HepG2 (cell line): ENCODE measurements at regions of chr6 and their contacts with region 1.

Region 1: DNA sequence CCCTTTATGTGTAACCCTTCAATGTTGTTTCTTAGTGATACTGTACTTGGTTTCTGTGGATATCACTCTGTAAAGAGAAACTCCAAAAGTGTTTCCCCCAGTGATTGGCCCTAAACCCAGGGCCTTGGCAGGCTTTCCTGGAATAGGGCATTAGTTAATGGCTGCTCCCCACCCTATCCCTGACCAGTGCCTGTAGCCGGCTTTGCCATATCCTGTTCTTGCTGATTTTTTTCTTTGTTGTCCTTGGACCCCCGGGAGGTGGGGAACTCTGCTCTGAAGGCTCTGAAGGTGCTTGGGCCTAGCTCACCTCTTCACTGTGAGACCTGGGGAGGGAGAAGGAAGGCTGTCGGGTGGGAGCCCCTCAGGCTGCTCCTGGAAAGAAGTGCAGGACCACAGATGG is 120.1 kb downstream of the TCP11 start:
- DNase-seq: no peak
- ATAC-seq: no peak
- H3K4me3 ChIP-seq: no peak overlapping the region
- H3K27ac ChIP-seq: no peak overlapping the region
- H3K4me1 ChIP-seq: no peaks in the 10 kb centered on the region
- H3K27me3 ChIP-seq: no peaks in the 10 kb centered on the region
- CTCF ChIP-seq: no peak
- EP300 ChIP-seq: no peak
- POLR2A ChIP-seq: no peak
- RAD21 ChIP-seq: no peak

Region 2: DNA sequence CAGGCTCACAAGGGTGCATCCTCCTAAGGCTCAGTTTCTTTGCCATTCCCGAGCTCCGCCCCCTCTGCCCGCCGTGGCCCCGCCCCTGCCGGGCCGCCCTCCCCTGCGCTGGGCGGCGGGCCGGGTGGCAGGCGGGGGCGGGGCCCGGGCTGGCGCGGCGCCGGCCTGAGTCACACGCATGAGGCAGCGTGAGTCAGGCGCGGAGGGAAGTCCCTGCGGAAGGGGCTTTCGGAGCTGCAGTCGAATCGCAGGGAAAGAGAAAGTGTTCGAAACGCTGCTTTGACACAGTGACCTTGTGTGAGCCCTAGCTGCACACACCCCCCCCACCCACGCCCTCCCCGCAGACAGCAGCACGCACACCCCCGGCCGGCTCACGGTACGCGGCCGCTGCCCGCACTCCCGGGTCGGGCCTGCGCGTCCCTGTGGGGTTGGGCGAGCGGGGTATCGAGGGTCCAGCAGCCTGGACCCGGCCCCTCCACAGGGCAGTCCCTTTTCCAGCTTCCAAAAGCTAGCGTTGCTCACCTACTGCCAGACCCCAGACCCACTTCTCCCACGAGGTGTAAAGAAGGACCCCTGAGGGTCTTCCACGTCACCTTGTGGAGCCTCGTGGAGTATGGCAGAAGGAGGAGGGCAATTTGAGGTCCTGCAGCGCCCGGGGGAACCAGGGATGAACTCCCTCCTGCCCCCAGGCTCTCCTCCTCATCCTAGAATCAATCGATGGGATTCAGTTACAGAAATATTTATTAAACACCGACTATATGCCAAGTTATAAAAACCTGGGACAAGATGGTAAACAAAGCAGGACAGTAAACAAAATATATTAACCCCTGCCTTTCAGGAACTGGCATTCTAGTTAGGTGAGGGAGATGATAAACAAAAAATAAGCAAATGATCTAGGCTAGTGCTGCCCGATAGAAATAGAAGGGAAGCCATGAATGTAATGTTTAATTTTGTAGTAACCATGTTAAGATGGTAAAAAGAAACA is 796.8 kb before region 1 on chr6:
- CTCF ChIA-PET with region 1: no interaction called
- POLR2A ChIA-PET with region 1: no interaction called
- in situ Hi-C with region 1: no loop called
- intact Hi-C with region 1: no loop called
- DNase-seq: peak; percentile 81
- ATAC-seq: peak; percentile 91
- H3K4me3 ChIP-seq: peak overlapping the region; percentile 60 to 76 (median 72)
- H3K27ac ChIP-seq: peak overlapping the region; percentile 38
- H3K4me1 ChIP-seq: peaks cover 38% of the 10 kb centered on the region
- H3K27me3 ChIP-seq: peaks cover 3 to 25% of the 10 kb centered on the region in 2 experiments; a peak in 2 of 5 replicates
- CTCF ChIP-seq: no peak
- EP300 ChIP-seq: peak in 1 of 2 experiments; percentile 24; a peak in 1 of 4 replicates
- POLR2A ChIP-seq: peak; percentile 88 to 93
- RAD21 ChIP-seq: peak; percentile 9; the same call in 1 of the 2 replicates

Region 3: DNA sequence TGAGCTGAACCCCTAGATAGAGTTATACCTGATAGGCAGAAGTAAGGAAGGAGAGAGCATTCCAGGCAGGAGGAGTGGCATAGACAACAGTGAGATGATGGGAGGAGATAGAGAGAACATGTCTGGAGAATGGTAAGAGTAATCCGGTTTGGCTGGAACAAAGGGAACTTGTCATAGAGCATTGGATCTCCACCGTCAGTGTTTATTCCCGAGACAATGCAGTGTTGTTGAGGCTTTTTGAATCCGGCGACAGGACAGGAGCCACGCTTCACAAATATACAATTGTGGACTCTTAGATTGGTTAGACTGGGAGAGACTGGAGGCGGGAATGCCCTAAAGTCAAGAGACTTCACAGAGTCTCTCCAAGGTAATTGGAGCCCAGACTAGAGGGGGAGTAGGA is 12.2 kb before region 1 on chr6:
- CTCF ChIA-PET with region 1: no interaction called
- POLR2A ChIA-PET with region 1: no interaction called
- in situ Hi-C with region 1: no loop called
- intact Hi-C with region 1: loop called (anchors 1 kb)
- DNase-seq: no peak
- ATAC-seq: no peak
- H3K4me3 ChIP-seq: no peak overlapping the region
- H3K27ac ChIP-seq: no peak overlapping the region
- H3K4me1 ChIP-seq: no peaks in the 10 kb centered on the region
- H3K27me3 ChIP-seq: no peaks in the 10 kb centered on the region
- CTCF ChIP-seq: no peak
- EP300 ChIP-seq: no peak
- POLR2A ChIP-seq: no peak
- RAD21 ChIP-seq: no peak